GM23248 (cell line): ENCODE measurements at regions of chr2 and their contacts with region 1.

Region 1: GRCh38 chr2:20781656-20782265 is 41.1 kb downstream of the LDAH start:
- DNase-seq: peak; percentile 32
- H3K4me3 ChIP-seq: no peak overlapping the region
- H3K27ac ChIP-seq: no peak overlapping the region
- H3K4me1 ChIP-seq: no peaks in the 10 kb centered on the region
- H3K27me3 ChIP-seq: no peaks in the 10 kb centered on the region

Region 2: GRCh38 chr2:20962939-20963557 is 181.3 kb after region 1 on chr2:
- in situ Hi-C with region 1: loop called (anchors 10 kb)
- DNase-seq: peak; percentile 67
- H3K4me3 ChIP-seq: no peak overlapping the region
- H3K27ac ChIP-seq: no peak overlapping the region
- H3K4me1 ChIP-seq: no peaks in the 10 kb centered on the region
- H3K27me3 ChIP-seq: peaks cover 31% of the 10 kb centered on the region